H1 (cell line): ENCODE measurements at regions of chr17 and their contacts with region 1.

Region 1: DNA sequence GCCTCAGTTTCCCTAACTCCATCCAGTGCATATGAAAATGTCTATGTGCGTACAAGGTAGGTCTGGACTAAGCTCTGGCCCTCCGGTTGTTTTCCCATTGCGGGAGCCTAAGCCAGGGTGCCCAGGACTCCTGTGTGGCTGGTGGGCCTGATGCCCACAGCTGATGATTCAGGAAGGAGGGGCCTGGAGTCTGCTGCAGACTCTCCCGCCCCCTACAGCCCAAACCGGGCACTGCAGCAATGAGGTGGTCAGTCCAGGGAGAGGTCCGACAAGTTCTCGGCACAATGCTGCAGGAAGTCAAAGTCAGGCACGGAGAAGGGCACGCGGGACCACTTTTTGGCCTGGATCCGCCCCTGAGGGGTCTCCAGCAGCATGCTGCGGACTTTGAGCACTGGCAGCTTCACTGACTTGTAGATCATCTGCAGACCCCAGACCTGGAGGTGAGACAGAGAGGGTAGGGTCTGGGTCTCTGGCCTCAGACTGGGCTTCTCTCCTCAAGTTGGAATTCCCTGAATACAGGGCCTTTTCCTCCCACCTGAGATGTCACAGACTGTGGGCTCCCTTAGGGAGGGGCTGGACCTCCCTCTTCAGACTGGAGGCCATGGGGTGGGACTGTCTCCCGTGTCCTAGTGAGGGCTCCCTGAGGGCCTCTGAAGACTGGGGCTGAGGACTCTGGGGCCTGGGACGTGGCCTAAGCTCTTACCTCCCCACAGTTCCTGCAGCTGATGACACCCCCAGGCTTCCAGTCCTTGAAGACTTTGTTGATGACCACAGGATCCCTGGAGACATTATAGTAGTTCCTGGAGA is 3.4 kb upstream of the ZNF385C start:
- DNase-seq: peak; percentile 73 to 100
- H3K4me3 ChIP-seq: no peak overlapping the region
- H3K27ac ChIP-seq: no peak overlapping the region
- H3K4me1 ChIP-seq: peaks cover 0 to 11% (median 8%) of the 10 kb centered on the region in 4 experiments; a peak in 6 of 7 replicates
- H3K27me3 ChIP-seq: peaks cover 4 to 15% (median 15%) of the 10 kb centered on the region in 4 experiments
- CTCF ChIP-seq: peak; percentile 95 to 99 (median 98)
- EP300 ChIP-seq: no peak
- POLR2A ChIP-seq: no peak
- RAD21 ChIP-seq: peak; percentile 93 to 96

Region 2: GRCh38 chr17:42078396-42079043 is 23.2 kb before region 1 on chr17:
- CTCF ChIA-PET with region 1: interaction called, 27 read pairs
- POLR2A ChIA-PET with region 1: no interaction called
- DNase-seq: no peak
- H3K4me3 ChIP-seq: no peak overlapping the region
- H3K27ac ChIP-seq: no peak overlapping the region
- H3K4me1 ChIP-seq: peaks cover 0 to 4% (median 3%) of the 10 kb centered on the region in 4 experiments; a peak in 3 of 7 replicates
- H3K27me3 ChIP-seq: no peaks in the 10 kb centered on the region
- CTCF ChIP-seq: no peak
- EP300 ChIP-seq: no peak
- POLR2A ChIP-seq: no peak
- RAD21 ChIP-seq: no peak

Region 3: GRCh38 chr17:42087736-42088705 is 13.7 kb before region 1 on chr17:
- CTCF ChIA-PET with region 1: interaction called, 323 read pairs
- POLR2A ChIA-PET with region 1: interaction called, 9 read pairs
- DNase-seq: no peak
- H3K4me3 ChIP-seq: no peak overlapping the region
- H3K27ac ChIP-seq: no peak overlapping the region
- H3K4me1 ChIP-seq: peaks cover 0 to 2% (median 0%) of the 10 kb centered on the region in 4 experiments; a peak in 1 of 7 replicates
- H3K27me3 ChIP-seq: no peaks in the 10 kb centered on the region
- CTCF ChIP-seq: no peak
- EP300 ChIP-seq: no peak
- POLR2A ChIP-seq: no peak
- RAD21 ChIP-seq: no peak

Region 4: GRCh38 chr17:42163113-42163512 is 61.4 kb after region 1 on chr17:
- CTCF ChIA-PET with region 1: no interaction called
- POLR2A ChIA-PET with region 1: no interaction called
- DNase-seq: peak in 1 of 2 experiments; percentile 94
- H3K4me3 ChIP-seq: no peak overlapping the region
- H3K27ac ChIP-seq: no peak overlapping the region
- H3K4me1 ChIP-seq: no peaks in the 10 kb centered on the region; a peak in 2 of 7 replicates
- H3K27me3 ChIP-seq: no peaks in the 10 kb centered on the region
- CTCF ChIP-seq: peak; percentile 84 to 96 (median 95)
- EP300 ChIP-seq: no peak
- POLR2A ChIP-seq: no peak
- RAD21 ChIP-seq: peak; percentile 64 to 73

Region 5: GRCh38 chr17:42266918-42267778 is 165.4 kb after region 1 on chr17:
- CTCF ChIA-PET with region 1: no interaction called
- POLR2A ChIA-PET with region 1: no interaction called
- DNase-seq: no peak
- H3K4me3 ChIP-seq: no peak overlapping the region
- H3K27ac ChIP-seq: no peak overlapping the region
- H3K4me1 ChIP-seq: peaks cover 0 to 5% (median under 1%) of the 10 kb centered on the region in 4 experiments; a peak in 2 of 7 replicates
- H3K27me3 ChIP-seq: no peaks in the 10 kb centered on the region
- CTCF ChIP-seq: no peak
- EP300 ChIP-seq: no peak
- POLR2A ChIP-seq: no peak
- RAD21 ChIP-seq: no peak